Dendritic cell treated with granulocyte-macrophage colony-stimulating factor and Interleukin-4, amounts not matched to agents 40 ng/mL and 50 ng/mL, for 4 days (primary cell): ENCODE measurements at regions of chr16 and their contacts with region 1.

Region 1: DNA sequence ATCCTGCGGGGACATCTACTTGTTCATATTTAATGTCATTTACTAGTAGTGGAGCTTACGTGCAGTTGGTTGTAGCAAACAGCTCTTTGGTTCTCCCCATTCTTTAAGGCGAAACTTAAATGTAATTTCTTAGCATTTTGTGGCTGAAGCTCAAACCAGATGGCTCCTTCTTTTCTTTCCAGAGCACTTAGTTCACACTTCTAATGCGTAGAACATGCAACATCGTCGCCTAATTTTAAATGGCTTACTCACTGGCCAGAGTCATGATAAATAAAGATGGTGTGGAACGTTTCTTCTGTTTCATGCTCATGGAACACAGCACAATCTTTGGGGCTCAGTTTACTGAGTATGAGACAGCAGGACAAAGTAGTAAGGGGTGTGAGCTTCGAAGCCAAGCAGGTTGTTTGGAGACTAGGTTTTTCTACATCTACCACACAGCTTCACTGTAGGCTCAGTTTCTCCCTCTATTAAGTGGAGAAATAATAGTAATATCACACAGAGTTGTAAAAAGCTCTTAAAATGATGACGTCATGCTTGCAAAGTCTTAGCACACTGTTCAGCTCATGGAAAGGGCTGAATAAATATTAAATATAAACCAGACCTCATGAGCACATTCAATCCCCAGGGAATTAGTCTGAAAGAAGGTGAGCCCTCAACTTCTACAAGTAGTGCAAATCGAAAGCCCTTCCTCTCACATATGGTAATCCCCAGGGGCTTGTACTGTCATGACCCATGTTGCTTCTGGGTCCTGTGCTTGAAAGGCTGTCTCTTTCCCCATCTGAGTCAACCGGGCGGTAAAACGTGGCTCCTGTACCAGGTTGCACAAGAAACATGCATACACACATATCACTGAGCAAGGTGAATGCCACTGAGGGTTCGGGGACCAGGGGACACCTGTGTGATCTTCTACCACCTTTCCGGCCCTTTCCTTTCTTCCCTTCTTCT is 384.3 kb downstream of the CDH13 start:
- H3K4me3 Mint-ChIP-seq: no peak overlapping the region
- H3K27ac Mint-ChIP-seq: no peak overlapping the region
- H3K4me1 Mint-ChIP-seq: no peaks in the 10 kb centered on the region
- H3K27me3 Mint-ChIP-seq: no peaks in the 10 kb centered on the region

Region 2: DNA sequence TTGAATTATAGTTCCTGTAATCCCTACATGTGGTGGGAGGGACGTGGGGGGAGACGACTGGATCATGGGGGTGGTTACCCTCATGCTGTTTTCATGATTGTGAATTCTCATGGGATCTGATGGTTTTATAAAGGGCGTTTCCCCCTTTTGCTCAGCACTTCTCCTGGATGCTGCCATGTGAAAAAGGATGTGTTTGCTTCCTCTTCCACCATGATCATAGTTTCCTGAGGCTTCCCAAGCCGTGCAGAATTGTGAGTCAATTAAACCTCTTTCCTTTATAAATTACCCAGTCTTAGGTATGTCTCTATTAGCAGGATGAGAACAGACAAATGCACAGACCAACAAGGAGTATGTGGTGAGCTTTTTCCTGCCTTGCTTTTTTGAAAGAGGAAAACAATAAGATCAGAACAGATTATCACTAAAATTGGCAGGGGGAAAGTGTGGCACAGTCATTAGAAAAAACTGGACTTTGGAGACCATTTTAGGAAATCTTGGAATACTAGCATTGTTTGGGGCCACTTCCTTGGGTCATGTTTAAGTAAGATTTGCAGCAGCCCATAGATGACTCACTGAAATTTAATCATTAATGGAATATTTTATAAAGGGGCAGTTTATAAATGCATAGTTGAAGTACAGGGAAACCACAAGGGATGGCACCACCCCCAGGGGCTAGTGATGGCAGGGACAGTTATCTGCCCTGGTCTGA is 31.5 kb before region 1 on chr16:
- intact Hi-C with region 1: no loop called
- H3K4me3 Mint-ChIP-seq: no peak overlapping the region
- H3K27ac Mint-ChIP-seq: no peak overlapping the region
- H3K4me1 Mint-ChIP-seq: no peaks in the 10 kb centered on the region
- H3K27me3 Mint-ChIP-seq: peaks cover 15% of the 10 kb centered on the region

Region 3: GRCh38 chr16:83023640-83024039 is 12.6 kb after region 1 on chr16:
- intact Hi-C with region 1: loop called (anchors 1 kb)
- H3K4me3 Mint-ChIP-seq: no peak overlapping the region
- H3K27ac Mint-ChIP-seq: no peak overlapping the region
- H3K4me1 Mint-ChIP-seq: no peaks in the 10 kb centered on the region
- H3K27me3 Mint-ChIP-seq: no peaks in the 10 kb centered on the region